ENCODE measurements at regions of chr17 and their contacts with region 1.

Region 1: DNA sequence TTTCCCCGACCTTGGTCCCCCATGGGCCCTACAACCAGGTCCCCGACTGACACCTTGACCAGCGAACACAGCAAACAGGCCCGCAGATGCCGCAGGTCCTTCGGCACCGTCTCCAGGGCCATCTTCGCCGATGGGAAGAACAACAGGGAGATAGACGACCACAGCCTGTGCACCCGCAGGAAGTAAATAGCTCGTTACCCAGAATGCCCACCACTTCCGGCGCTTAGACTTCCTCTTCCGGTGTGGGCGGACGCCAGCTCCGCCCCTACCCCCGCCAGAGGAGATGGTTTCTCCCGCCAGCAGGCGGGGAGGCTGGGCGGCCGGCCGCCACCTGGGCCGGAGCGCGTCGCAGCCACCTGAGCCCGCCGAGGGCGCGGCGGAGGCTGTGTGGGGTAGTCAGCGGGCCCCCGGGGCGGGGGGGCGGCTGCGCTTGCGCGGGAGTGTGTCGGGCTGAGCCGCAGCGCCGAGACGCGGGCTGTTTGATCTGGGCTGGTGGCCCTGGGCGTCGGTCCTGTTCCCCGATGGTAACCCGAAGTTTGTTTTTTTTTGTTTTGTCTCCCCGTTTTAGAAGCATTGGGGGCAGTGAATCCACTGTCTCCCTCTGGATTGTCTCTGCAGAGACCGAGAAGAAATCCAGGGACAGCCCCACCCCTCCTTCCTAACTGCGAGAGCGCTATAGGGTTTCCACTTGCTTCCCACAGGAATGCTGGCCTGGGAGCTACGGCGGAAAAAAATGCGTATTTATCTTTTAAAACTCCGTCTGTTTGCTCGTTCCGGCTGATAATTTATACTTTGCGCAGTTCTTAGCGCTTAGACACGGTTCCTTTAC is at the start of gene SUPT4H1:
- DNase-seq: peak; percentile 94
- ATAC-seq: peak; percentile 91
- H3K4me3 Mint-ChIP-seq: peak within 1 kb of the TSS; percentile 100
- H3K27ac Mint-ChIP-seq: peak within 1 kb of the TSS; percentile 97
- H3K4me1 Mint-ChIP-seq: peaks cover 50% of the 10 kb centered on the region
- H3K27me3 Mint-ChIP-seq: no peaks in the 10 kb centered on the region
- total RNA-seq, gene SUPT4H1: 75.2 to 90.8 TPM

Region 2: DNA sequence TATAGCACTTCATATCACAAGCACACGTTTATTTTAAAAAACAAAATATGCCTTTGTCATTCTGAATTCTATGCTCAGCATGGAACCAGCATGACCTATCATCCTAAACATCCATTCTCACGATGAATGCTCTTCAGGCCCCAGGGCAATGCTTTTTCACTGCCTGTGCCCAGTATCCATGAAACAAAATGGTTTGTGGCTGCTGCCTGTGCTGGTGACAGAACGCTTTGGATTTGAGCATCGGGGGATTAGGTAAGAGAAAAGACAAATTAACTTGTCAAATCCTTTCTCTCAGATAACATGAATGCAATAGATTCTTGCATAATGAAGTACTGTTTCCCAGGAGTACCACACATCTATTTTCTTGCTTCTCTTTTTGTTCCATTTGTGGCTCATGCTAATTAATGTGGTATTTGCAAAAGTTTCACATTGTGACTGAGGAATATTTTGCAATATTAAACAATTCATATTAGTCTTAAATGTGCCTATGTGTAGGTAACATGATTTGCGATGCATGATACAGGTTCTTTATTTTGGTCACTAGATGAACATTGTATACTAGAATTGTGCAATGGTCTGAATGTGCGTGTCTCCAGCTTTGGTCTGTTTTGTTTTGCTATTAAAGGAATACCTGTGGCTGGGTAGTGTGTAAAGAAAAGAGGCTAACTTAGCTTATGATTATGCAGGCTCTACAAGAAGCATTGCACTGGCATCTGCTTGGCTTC is 319.4 kb before region 1 on chr17:
- CTCF ChIA-PET with region 1: no interaction called
- POLR2A ChIA-PET with region 1: no interaction called
- DNase-seq: no peak
- ATAC-seq: no peak
- H3K4me3 Mint-ChIP-seq: no peak overlapping the region
- H3K27ac Mint-ChIP-seq: no peak overlapping the region
- H3K4me1 Mint-ChIP-seq: no peaks in the 10 kb centered on the region
- H3K27me3 Mint-ChIP-seq: peaks cover 23% of the 10 kb centered on the region

Region 3: GRCh38 chr17:58303971-58304725 is 48.1 kb before region 1 on chr17:
- CTCF ChIA-PET with region 1: interaction called, 11 read pairs
- POLR2A ChIA-PET with region 1: interaction called, 5 read pairs
- DNase-seq: peak; percentile 74
- ATAC-seq: peak; percentile 73
- H3K4me3 Mint-ChIP-seq: no peak overlapping the region
- H3K27ac Mint-ChIP-seq: no peak overlapping the region
- H3K4me1 Mint-ChIP-seq: peaks cover 3% of the 10 kb centered on the region
- H3K27me3 Mint-ChIP-seq: peaks cover 8% of the 10 kb centered on the region

Region 4: DNA sequence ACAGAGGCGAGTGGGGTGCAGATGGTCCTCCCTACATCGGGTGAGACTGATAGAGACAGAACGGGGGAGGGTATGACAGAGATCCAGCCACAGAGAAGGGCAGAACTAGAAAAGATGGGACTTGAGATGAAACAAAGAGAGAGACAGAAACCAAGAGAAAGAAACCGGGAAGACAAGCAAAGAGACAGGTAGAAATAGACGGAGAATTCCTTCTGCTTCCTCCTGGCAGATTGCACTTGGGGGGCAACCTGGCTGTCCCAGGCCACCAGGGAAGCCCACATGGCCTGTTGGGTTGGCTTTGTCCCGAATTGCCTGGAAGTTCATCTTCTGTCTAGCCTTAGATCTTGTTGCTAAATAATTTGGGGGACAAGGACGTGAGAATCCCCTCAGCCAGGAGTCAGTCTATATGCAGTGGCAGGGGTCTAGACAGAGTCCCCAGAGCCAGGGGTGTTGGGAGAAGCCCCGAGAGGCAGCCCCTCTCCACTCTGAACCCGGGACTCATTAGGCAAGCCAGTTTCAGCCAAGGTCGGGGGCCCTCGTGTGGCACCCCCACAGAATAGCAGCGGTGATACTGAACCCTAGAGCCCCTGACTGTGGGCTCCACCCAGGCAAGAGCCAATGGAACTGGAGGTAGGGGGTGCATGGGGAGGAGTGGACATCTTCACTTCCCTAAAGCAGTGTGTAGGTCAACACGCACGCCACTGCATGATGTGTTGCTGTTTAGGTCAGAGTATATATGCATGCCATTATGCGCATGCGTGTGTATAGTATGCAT is 23.0 kb before region 1 on chr17:
- CTCF ChIA-PET with region 1: interaction called, 165 read pairs
- POLR2A ChIA-PET with region 1: interaction called, 2,649 read pairs
- DNase-seq: peak; percentile 90
- ATAC-seq: peak; percentile 18
- H3K4me3 Mint-ChIP-seq: peak overlapping the region; percentile 99
- H3K27ac Mint-ChIP-seq: peak overlapping the region; percentile 92
- H3K4me1 Mint-ChIP-seq: peaks cover 42% of the 10 kb centered on the region
- H3K27me3 Mint-ChIP-seq: peaks cover 12% of the 10 kb centered on the region

Region 5: GRCh38 chr17:58337600-58338453 is 14.4 kb before region 1 on chr17:
- CTCF ChIA-PET with region 1: interaction called, 165 read pairs
- POLR2A ChIA-PET with region 1: interaction called, 2,649 read pairs
- DNase-seq: peak; percentile 96
- ATAC-seq: peak; percentile 67
- H3K4me3 Mint-ChIP-seq: peak overlapping the region; percentile 99
- H3K27ac Mint-ChIP-seq: peak overlapping the region; percentile 92
- H3K4me1 Mint-ChIP-seq: peaks cover 39% of the 10 kb centered on the region
- H3K27me3 Mint-ChIP-seq: no peaks in the 10 kb centered on the region

Region 6: GRCh38 chr17:58364270-58364942 is 12.2 kb after region 1 on chr17:
- CTCF ChIA-PET with region 1: interaction called, 5 read pairs
- POLR2A ChIA-PET with region 1: interaction called, 69 read pairs
- DNase-seq: no peak
- ATAC-seq: no peak
- H3K4me3 Mint-ChIP-seq: no peak overlapping the region
- H3K27ac Mint-ChIP-seq: no peak overlapping the region
- H3K4me1 Mint-ChIP-seq: no peaks in the 10 kb centered on the region
- H3K27me3 Mint-ChIP-seq: no peaks in the 10 kb centered on the region

Region 7: DNA sequence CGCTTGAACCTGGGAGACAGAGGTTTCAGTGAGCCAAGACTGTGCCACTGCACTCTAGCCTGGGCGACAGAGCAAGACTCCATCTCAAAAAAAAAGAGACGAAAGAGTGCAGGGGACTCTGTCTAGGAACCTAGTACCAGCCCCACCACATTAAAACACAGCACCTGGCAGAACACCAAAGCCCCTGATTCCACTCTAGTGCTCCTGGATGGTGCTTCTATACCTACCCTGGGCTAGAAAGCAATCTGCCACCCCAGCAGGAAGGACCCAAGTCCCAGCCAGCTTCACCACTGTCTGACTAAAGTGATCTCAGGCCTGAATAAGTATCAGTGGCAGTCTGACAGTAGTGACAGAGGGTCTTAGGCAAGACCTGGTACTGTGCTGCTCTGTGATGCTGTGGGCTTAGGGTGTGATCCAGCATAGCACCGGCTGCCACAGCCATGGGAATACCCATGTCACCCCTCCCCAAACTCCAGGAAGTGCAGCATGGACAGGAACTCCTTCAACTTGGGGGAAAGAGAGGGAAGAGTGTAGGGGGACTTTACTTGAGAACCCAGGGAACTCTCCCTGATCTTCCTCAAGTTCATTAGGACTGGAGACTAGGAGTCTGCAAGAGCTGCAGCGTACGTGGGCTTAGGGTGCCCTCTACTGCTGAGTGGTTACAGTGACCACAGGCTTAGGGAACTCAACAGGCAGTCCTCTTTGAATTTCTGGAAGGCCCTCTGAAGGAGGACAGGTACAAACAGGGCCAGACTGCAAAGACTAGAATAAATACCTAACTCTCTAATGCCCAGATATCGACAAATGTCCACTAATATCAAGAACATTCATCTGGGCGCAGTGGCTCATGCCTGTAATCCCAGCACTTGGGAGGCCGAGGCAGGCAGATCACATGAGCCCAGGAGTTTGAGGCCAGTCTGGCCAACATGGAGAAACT is 95.1 kb after region 1 on chr17:
- CTCF ChIA-PET with region 1: interaction called, 10 read pairs
- POLR2A ChIA-PET with region 1: interaction called, 6 read pairs
- DNase-seq: peak; percentile 84
- ATAC-seq: peak; percentile 95
- H3K4me3 Mint-ChIP-seq: no peak overlapping the region
- H3K27ac Mint-ChIP-seq: no peak overlapping the region
- H3K4me1 Mint-ChIP-seq: peaks cover 4% of the 10 kb centered on the region
- H3K27me3 Mint-ChIP-seq: no peaks in the 10 kb centered on the region

Measured in activated CD8-positive, alpha-beta T cell treated with anti-CD3 and anti-CD28 coated beads, Interleukin-2, amount 10 ng/mL, durations not matched to agents 7 days and 5 days (primary cell).